ENCODE measurements at regions of chr10 and their contacts with region 1.

Region 1: DNA sequence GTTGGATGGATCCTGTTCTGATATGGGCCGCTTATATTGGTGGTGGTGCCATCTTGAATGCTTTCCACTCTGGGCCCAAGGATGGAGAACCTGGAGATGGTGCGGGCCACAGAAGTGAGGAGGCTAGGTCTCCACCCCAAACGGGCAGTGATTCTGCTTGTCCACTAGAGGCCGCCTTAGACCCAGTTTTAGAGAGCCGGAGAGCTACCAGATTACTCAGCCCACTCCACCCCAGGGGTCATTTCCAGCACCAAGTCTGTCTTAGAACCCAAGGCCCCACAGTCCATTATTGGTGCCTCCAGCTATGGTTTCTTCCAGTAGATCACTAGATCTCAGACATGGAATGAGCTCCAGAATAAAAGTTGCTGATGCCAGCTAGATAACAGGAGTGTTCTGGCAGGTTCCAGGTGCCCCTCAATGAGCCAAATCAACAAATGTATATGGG is 11.8 kb upstream of the CAMK2G start:
- H3K4me3 Mint-ChIP-seq: no peak overlapping the region
- H3K27ac Mint-ChIP-seq: peak overlapping the region; percentile 96
- H3K4me1 Mint-ChIP-seq: peaks cover 48% of the 10 kb centered on the region
- H3K27me3 Mint-ChIP-seq: no peaks in the 10 kb centered on the region

Region 2: DNA sequence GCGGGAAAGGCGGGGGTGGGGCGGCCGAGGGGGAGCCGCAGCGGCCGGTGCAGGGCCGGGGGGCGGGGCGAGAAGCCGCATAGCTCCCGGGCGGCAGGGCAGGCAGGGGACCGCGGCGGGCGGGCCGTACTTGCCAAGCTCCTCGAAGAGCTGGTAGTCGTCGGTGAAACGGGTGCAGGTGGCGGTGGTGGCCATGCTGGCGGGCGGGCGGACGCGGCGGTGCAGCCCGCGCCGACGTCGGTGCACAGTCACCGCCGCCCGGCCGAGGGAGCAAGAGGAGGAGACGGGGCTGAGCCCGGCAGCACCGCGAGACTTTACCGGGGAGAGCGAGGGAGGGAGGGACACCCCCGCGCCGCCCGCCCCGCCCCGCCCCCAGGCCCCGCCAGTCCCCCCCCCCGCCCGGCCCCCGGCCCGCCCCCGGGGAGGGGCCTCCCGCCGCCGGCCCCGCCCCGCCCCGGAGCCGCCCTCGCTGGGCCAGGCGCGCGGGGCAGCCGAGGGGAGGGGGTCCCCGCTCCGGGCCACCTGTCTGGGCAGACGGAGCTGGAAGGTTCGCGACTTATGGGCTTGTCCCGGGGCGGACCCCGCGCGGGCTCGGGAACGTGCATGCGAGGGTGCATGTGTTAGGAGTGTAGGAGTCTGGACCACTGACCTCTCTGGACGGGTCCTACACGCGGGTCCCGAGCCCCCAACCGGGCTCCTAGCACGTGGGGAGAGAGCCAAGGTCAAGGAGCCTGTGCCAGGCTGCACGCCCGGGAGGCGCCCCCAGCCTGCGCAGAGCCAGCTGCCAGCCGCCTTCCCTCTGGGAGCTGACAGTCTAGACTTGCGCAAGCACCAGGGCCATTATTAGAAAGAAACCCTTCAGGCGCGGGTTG is 11.6 kb before region 1 on chr10 and contains the start of gene CAMK2G:
- intact Hi-C with region 1: no loop called
- H3K4me3 Mint-ChIP-seq: peak within 1 kb of the TSS; percentile 77
- H3K27ac Mint-ChIP-seq: peak within 1 kb of the TSS; percentile 69
- H3K4me1 Mint-ChIP-seq: peaks cover 48% of the 10 kb centered on the region
- H3K27me3 Mint-ChIP-seq: peaks cover 1% of the 10 kb centered on the region

Region 3: GRCh38 chr10:73899423-73899822 is 13.3 kb after region 1 on chr10:
- intact Hi-C with region 1: loop called (anchors 1 kb)
- H3K4me3 Mint-ChIP-seq: no peak overlapping the region
- H3K27ac Mint-ChIP-seq: peak overlapping the region; percentile 91
- H3K4me1 Mint-ChIP-seq: peaks cover 69% of the 10 kb centered on the region
- H3K27me3 Mint-ChIP-seq: no peaks in the 10 kb centered on the region

Region 4: GRCh38 chr10:73908853-73909538 is 22.9 kb after region 1 on chr10:
- intact Hi-C with region 1: loop called (anchors 1 kb)
- H3K4me3 Mint-ChIP-seq: peak overlapping the region; percentile 72
- H3K27ac Mint-ChIP-seq: peak overlapping the region; percentile 93
- H3K4me1 Mint-ChIP-seq: peaks cover 75% of the 10 kb centered on the region
- H3K27me3 Mint-ChIP-seq: no peaks in the 10 kb centered on the region

Region 5: GRCh38 chr10:73940634-73941221 is 54.6 kb after region 1 on chr10:
- intact Hi-C with region 1: loop called (anchors 1 kb)
- H3K4me3 Mint-ChIP-seq: peak overlapping the region; percentile 69
- H3K27ac Mint-ChIP-seq: peak overlapping the region; percentile 92
- H3K4me1 Mint-ChIP-seq: peaks cover 22% of the 10 kb centered on the region
- H3K27me3 Mint-ChIP-seq: peaks cover 1% of the 10 kb centered on the region

Region 6: DNA sequence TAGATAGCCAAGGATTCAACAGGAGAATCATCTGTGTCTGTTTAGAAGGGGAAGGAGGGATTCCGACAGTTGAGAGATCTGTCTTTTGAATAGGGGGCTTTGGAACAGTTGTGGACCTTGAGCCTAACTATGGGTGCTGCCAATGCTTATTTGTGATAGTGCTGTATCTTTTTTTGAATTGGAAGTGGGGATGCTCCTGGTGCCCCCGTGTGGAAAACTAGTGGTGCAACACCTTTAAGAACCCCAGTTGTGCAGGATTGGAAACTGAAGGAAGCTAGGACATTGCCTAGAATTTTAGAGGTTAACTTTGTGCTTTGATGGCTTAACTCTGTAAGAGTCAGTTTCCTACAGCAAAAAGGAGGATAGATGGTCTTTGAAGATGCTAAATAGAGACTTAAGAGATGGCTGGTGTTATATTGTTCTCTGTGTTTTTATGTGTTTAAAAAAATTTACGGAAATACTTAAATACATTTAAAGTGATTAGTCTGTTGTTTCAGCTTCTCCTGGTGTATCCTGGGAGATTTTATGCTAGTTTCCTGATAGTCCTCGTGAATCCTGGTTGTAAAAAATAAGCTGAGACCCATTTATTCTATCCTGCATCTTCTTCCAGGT is 195.2 kb after region 1 on chr10:
- intact Hi-C with region 1: loop called (anchors 1 kb)
- H3K4me3 Mint-ChIP-seq: no peak overlapping the region
- H3K27ac Mint-ChIP-seq: no peak overlapping the region
- H3K4me1 Mint-ChIP-seq: peaks cover 31% of the 10 kb centered on the region
- H3K27me3 Mint-ChIP-seq: no peaks in the 10 kb centered on the region

Region 7: GRCh38 chr10:74096777-74097176 is 210.7 kb after region 1 on chr10:
- intact Hi-C with region 1: no loop called
- H3K4me3 Mint-ChIP-seq: no peak overlapping the region
- H3K27ac Mint-ChIP-seq: no peak overlapping the region
- H3K4me1 Mint-ChIP-seq: no peaks in the 10 kb centered on the region
- H3K27me3 Mint-ChIP-seq: no peaks in the 10 kb centered on the region

Region 8: DNA sequence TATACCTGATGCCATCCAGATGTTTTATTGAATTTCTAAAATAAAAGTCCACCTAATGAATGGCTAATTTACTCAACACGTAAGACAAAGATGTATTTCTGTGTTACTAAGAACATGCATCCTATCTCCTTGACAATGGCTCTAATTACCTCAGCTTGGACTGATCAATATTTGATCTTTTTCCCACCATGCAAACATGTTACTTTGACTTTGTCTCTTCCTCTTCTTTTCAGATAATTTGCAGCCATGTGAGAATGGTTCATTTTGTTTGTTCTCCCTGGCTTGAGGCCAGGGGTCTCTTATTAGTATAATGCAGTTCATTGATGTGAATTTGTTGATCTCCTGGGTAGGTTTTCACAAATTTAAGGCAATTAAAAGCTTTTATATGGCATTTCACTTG is 567.1 kb after region 1 on chr10:
- intact Hi-C with region 1: no loop called
- H3K4me3 Mint-ChIP-seq: no peak overlapping the region
- H3K27ac Mint-ChIP-seq: no peak overlapping the region
- H3K4me1 Mint-ChIP-seq: no peaks in the 10 kb centered on the region
- H3K27me3 Mint-ChIP-seq: no peaks in the 10 kb centered on the region